ENCODE measurements at regions of chr10 and their contacts with region 1.

Region 1: GRCh38 chr10:131651674-131652437 is 249.0 kb upstream of the PPP2R2D start:
- DNase-seq: no peak
- H3K4me3 ChIP-seq: no peak overlapping the region
- H3K27ac ChIP-seq: no peak overlapping the region
- H3K4me1 ChIP-seq: no peaks in the 10 kb centered on the region
- H3K27me3 ChIP-seq: peaks cover 0 to 30% of the 10 kb centered on the region in 2 donors
- CTCF ChIP-seq: no peak
- POLR2A ChIP-seq: no peak

Region 2: DNA sequence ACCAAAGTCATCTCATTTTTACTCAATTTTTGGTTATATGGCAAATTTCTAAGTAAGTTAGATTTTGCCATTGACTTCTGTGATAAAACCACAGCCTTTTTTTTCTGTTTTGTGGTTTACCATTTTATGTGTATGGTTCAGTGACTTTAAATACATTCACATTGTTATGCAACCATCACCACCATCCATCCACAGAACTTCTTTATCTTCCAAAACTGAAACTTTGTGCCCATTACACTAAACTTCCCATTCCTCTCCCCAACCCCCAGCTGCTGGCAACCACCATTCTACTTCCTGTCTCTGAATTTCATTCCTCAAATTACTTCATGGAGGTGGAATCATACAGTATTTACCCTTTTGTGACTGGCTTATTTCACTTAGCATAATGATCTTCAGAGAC is 59.9 kb before region 1 on chr10:
- intact Hi-C with region 1: loop called (anchors 5 kb)
- DNase-seq: no peak
- H3K4me3 ChIP-seq: no peak overlapping the region
- H3K27ac ChIP-seq: no peak overlapping the region
- H3K4me1 ChIP-seq: no peaks in the 10 kb centered on the region
- H3K27me3 ChIP-seq: peaks cover 0 to 18% of the 10 kb centered on the region in 2 donors
- CTCF ChIP-seq: no peak
- POLR2A ChIP-seq: no peak

Region 3: GRCh38 chr10:131670341-131670740 is 18.5 kb after region 1 on chr10:
- intact Hi-C with region 1: no loop called
- DNase-seq: no peak
- H3K4me3 ChIP-seq: no peak overlapping the region
- H3K27ac ChIP-seq: no peak overlapping the region
- H3K4me1 ChIP-seq: no peaks in the 10 kb centered on the region
- H3K27me3 ChIP-seq: no peaks in the 10 kb centered on the region
- CTCF ChIP-seq: no peak
- POLR2A ChIP-seq: no peak

Measured in breast epithelium (tissue), 4 donors.